Naive thymus-derived CD4-positive, alpha-beta T cell (primary cell): ENCODE measurements at regions of chr17 and their contacts with region 1.

Region 1: DNA sequence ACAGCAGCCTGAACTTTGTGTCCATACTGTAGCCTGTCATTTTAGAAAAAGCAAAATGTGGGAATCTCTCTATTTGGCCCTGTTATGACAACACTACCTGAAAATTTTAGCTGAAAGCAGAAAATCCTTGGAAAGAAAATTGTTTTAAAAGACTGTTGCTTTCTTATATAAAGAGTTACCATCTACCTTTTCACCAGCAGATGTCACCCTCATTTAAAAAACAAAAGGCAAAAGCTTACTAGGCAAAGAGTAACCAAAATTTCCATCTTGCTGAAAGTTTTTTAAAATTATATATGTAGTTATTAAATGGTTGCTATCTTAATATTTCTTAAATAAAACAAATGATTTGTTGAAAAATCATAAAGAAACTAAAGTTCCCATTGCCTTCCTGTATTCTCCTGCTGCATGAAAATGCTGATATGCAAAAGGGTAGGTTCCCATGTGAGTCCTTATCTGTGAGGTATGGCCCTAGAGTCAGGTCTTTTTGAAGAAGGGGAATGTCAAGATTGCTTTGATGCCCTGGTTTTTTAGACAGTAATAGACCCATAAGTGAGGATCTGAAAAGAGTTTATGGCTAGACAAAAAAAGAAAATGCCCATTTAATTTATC is 61.0 kb downstream of the TNRC6C start:
- DNase-seq: peak in 5 of 9 donors; percentile 20 to 37 (median 26)
- ATAC-seq: no peak
- H3K4me3 ChIP-seq: no peak overlapping the region
- H3K4me3 Mint-ChIP-seq: peak overlapping the region in 2 of 10 donors; percentile 7 to 37
- H3K27ac ChIP-seq: no peak overlapping the region
- H3K27ac Mint-ChIP-seq: peak overlapping the region in 6 of 9 donors; percentile 1 to 89 (median 38)
- H3K4me1 ChIP-seq: peaks cover 11 to 15% of the 10 kb centered on the region in 2 donors
- H3K4me1 Mint-ChIP-seq: peaks cover 14 to 45% (median 28%) of the 10 kb centered on the region in 7 donors
- H3K27me3 ChIP-seq: no peaks in the 10 kb centered on the region
- H3K27me3 Mint-ChIP-seq: no peaks in the 10 kb centered on the region

Region 2: DNA sequence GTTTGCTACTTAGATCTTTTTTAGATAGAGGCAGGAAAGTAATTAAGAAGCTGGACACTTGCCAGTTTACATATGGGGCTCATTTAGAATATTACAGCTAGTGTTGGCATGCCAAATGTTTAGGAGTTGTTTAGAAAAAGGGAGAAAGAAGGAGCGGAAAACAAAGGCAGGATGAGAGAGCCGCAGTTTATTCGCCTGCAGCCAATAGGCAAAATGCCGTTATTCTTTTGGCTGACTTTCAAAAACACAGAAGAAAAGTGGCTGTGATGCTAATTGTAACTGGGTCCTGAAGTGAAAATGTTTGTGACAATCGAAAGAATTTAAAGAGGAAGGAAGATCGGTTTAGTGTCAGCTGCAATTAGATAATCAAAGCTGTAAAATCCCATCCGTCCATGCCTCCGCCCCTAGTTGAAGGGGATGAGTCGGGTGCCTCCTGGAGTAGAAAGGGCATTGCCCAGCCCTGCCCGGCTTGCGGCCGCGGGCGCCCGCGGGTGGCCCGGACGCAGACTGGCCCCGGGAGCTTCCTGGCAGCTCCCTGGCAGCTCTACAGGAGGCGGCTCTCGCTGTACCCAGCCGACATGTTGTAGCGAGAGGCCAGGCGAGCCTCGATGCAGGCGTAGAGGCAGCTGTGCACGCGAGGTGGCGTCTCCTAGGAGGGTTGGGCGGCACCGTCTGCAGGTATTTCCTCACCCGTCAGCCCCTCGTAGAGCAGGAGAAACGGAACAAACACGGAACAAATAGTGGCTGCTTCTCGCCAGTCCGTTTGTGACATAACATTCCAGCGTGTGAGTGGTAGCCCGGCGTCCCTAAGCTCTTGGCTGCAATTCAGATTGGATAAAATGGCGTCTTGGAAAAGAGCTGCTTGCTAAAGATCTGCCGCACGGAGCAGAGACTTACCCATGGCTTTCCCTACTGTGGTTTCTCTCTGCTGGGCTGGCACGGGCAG is 21.2 kb after region 1 on chr17:
- CTCF ChIA-PET with region 1: interaction called, 5 read pairs
- POLR2A ChIA-PET with region 1: interaction called, 4 read pairs
- intact Hi-C with region 1: loop called in 1 of 2 experiments (anchors 1 kb)
- DNase-seq: peak in 7 of 9 donors; percentile 14 to 52 (median 38)
- ATAC-seq: peak; percentile 87
- H3K4me3 ChIP-seq: peak overlapping the region; percentile 24
- H3K4me3 Mint-ChIP-seq: peak overlapping the region; percentile 64 to 85 (median 76)
- H3K27ac ChIP-seq: peak overlapping the region; percentile 62
- H3K27ac Mint-ChIP-seq: peak overlapping the region in 8 of 9 donors; percentile 65 to 95 (median 78)
- H3K4me1 ChIP-seq: no peaks in the 10 kb centered on the region
- H3K4me1 Mint-ChIP-seq: peaks cover 0 to 79% (median 64%) of the 10 kb centered on the region in 7 donors
- H3K27me3 ChIP-seq: no peaks in the 10 kb centered on the region
- H3K27me3 Mint-ChIP-seq: no peaks in the 10 kb centered on the region

Region 3: GRCh38 chr17:78089576-78090281 is 70.3 kb after region 1 on chr17:
- CTCF ChIA-PET with region 1: no interaction called
- POLR2A ChIA-PET with region 1: no interaction called
- intact Hi-C with region 1: loop called in 1 of 2 experiments (anchors 5 kb)
- DNase-seq: no peak
- ATAC-seq: peak; percentile 40
- H3K4me3 ChIP-seq: no peak overlapping the region
- H3K4me3 Mint-ChIP-seq: peak overlapping the region in 1 of 10 donors; percentile 3
- H3K27ac ChIP-seq: peak overlapping the region; percentile 11
- H3K27ac Mint-ChIP-seq: peak overlapping the region in 8 of 9 donors; percentile 31 to 86 (median 78)
- H3K4me1 ChIP-seq: no peaks in the 10 kb centered on the region
- H3K4me1 Mint-ChIP-seq: peaks cover 0 to 8% (median 4%) of the 10 kb centered on the region in 7 donors
- H3K27me3 ChIP-seq: no peaks in the 10 kb centered on the region
- H3K27me3 Mint-ChIP-seq: no peaks in the 10 kb centered on the region

Region 4: DNA sequence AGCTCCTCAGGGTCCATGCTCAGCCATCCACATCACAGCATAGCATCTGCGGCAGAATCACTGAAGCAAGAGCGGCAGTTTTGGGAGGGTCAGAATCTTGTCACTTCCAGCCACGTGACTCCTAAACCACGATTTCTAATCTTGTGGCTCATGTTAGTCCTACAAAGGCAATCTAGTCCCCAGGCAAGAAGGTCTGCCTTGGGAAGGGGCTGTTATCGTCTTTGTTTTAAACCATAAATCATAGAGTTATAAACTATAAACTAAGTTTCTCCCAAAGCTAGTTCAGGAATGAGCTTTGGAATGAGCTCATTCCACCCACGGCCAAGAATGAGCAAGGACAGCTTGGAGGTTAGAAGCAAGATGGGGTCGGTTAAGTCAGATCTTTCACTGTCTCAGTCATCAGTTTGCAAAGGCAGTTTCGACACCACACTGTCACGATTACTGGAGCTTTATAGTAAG is 578.6 kb after region 1 on chr17:
- CTCF ChIA-PET with region 1: no interaction called
- POLR2A ChIA-PET with region 1: no interaction called
- intact Hi-C with region 1: no loop called
- DNase-seq: no peak
- ATAC-seq: no peak
- H3K4me3 ChIP-seq: no peak overlapping the region
- H3K4me3 Mint-ChIP-seq: no peak overlapping the region
- H3K27ac ChIP-seq: no peak overlapping the region
- H3K27ac Mint-ChIP-seq: no peak overlapping the region
- H3K4me1 ChIP-seq: no peaks in the 10 kb centered on the region
- H3K4me1 Mint-ChIP-seq: peaks cover 0 to 4% (median 0%) of the 10 kb centered on the region in 7 donors
- H3K27me3 ChIP-seq: no peaks in the 10 kb centered on the region
- H3K27me3 Mint-ChIP-seq: peaks cover 0 to 7% (median 2%) of the 10 kb centered on the region in 5 donors